ENCODE measurements at regions of chr9 and their contacts with region 1.

Region 1: GRCh38 chr9:22238809-22239684 is 207.6 kb upstream of the DMRTA1 start:
- DNase-seq: no peak
- H3K4me3 ChIP-seq: no peak overlapping the region
- CTCF ChIP-seq: peak; percentile 13

Region 2: DNA sequence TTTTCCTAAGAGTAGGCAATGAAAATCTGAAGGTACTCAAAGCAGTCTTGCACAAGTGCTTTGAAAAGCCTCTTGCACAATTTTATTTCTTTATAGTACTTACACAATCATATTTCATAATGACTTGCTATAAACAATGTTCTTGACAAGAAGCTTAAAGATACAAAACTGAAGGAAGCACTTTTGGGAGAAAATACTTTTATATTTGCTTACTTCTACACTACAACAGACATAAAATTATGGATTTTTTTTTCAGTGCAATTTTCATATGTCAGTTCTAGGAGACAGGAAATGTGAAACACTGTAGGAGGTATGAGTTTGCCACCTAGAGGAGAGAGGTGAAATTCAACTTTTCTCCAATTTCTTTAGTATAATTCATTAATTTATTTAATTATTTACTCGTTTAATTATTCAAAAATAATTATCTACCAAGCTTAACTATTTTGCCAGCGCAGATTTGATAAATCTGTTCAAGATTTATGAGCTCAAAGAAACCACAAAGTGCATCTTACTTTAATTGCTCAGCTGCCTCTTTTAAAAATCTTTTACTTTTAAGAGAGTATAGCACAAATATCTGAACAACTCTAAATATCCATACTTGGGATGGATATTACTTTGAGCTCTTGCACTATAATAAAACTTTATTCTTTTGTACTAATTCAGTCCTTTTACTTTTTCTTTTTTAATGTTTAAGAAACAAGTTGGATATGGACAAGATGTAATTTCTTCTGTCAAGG is 200.9 kb before region 1 on chr9:
- CTCF ChIA-PET with region 1: interaction called, 34 read pairs
- POLR2A ChIA-PET with region 1: no interaction called
- DNase-seq: no peak
- H3K4me3 ChIP-seq: no peak overlapping the region
- CTCF ChIP-seq: peak; percentile 9

Region 3: DNA sequence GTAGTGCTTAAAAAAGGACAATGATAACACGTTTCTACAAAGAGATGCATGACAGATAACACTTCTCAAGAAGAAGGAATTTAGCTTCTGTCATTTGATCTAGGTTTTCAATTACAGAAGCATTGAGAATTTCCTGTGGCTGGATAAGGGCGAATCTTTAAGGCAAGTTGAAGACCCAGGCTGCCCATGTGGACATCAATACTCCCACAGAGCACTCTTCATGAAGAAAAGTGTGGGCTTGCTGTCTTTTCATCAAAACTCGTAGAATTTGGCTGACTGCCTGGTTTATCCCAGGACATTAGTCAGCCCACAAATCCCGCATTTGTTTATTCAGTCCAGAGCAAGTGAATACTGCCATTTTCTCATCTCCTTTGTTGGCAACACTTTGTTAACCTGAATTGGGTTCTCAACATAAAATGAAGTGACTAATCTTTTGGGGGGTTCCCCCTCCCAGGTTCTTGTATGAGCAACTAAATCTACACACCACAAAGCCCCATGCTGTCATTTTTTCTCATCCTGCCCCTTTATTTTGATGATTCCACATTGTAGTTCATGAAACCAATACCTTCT is 186.6 kb before region 1 on chr9:
- CTCF ChIA-PET with region 1: interaction called, 17 read pairs
- POLR2A ChIA-PET with region 1: no interaction called
- DNase-seq: peak; percentile 76
- H3K4me3 ChIP-seq: no peak overlapping the region
- CTCF ChIP-seq: no peak

Region 4: GRCh38 chr9:22119537-22120158 is 119.4 kb before region 1 on chr9:
- CTCF ChIA-PET with region 1: interaction called, 43 read pairs
- POLR2A ChIA-PET with region 1: no interaction called
- DNase-seq: no peak
- H3K4me3 ChIP-seq: no peak overlapping the region
- CTCF ChIP-seq: peak; percentile 51

Region 5: DNA sequence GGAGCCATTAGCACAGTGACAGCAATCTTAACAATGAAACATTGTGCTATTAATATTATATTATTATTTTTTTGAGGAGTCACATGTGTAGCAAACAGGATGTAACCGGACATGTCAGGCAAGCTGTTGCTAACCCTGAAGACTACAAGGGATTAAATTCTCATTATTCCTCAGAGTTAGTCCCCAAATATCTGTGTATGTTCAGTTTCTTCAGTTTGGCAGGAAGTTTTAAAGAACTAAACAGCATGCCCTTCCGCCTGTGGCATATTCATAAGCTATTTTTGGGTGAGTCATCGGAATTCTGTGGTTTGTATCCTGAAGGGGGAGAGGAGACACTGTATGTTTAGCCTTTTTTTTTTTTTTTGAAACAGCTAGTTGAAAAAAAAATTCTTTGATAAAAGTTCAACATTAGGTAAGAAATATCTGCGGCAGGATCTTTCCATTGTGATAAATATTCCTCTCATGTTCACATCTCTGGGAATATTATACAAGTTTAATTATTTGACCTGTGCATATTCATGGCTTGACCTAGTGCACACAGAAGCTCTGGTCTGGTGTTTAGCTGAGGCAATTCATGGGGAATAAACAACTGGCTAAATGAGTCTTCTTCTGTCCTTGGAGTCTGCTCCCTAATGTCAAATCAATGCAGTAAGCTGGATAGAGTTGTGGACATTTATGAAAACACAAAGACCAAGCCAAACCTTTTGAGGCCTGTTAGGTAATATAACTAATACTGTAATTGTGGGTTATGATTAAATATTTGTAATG is 27.3 kb before region 1 on chr9:
- CTCF ChIA-PET with region 1: interaction called, 11 read pairs
- POLR2A ChIA-PET with region 1: interaction called, 3 read pairs
- DNase-seq: peak; percentile 71
- H3K4me3 ChIP-seq: no peak overlapping the region
- CTCF ChIP-seq: no peak

Region 6: DNA sequence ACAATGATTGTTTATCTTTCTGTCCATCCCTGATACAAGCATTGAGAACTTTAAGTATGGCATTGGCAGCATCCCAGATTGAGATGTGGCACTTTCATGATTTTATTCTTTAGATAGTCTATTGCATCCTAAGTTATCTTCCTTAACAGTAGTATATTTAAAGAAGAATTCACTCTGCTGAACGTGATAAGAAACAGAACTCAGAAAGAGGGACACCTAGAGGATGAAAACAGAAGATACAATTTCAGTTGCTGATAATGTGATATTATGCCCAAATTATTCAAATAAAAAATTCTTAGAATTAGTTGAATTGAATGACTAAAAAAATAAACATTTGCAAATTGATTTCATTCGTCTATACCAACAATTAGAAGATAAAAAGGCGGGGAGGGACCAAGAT is 10.5 kb before region 1 on chr9:
- CTCF ChIA-PET with region 1: interaction called, 10 read pairs
- POLR2A ChIA-PET with region 1: no interaction called
- DNase-seq: no peak
- H3K4me3 ChIP-seq: no peak overlapping the region
- CTCF ChIP-seq: peak; percentile 25

Region 7: GRCh38 chr9:22395585-22396205 is 156.6 kb after region 1 on chr9:
- CTCF ChIA-PET with region 1: no interaction called
- POLR2A ChIA-PET with region 1: no interaction called
- DNase-seq: no peak
- H3K4me3 ChIP-seq: no peak overlapping the region
- CTCF ChIP-seq: no peak

Region 8: GRCh38 chr9:22452415-22453010 is 213.5 kb after region 1 on chr9:
- CTCF ChIA-PET with region 1: interaction called, 30 read pairs
- POLR2A ChIA-PET with region 1: no interaction called
- DNase-seq: no peak
- H3K4me3 ChIP-seq: no peak overlapping the region
- CTCF ChIP-seq: peak; percentile 48

Region 9: DNA sequence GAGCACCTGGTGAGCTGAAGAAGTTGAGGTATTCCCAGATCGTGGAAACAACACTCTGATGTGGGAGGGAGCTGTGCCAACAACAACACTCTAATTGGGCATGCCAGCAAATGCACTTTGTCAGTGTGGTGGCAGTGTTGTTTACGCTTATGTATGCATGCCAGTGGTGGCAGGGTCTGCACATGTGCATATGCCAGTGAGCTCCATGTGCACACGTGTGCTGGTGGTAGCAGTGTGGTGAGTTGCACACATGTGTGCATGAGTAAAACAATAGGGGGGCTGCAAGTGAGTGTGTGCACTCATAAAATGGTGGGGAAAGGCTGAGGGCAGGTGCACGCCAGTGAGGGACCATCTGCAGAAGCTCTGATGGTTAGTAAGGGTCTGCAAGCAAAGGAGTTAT is 341.7 kb after region 1 on chr9:
- CTCF ChIA-PET with region 1: no interaction called
- POLR2A ChIA-PET with region 1: no interaction called
- DNase-seq: no peak
- H3K4me3 ChIP-seq: no peak overlapping the region
- CTCF ChIP-seq: no peak